Caco-2 (cell line): ENCODE measurements at regions of chr11 and their contacts with region 1.

Region 1: DNA sequence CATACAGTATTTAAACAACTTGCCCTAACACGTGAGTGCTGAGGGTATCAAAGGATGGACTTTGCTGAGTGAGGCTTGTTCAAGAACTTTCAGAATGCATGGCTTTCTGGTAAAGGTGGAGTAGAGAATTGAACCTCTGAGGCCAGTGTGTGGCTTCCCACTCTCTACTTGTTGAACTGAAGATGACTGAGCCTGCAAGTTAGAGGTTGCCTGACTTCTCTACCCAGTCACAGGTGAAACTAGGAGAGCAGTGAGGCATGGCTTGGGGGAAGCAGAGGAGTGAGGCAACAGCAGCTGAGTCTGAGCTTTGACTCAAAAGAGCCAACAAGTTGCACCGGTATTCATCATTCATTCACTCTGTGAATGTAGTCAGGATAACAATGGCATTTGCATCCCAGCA is 256.4 kb upstream of the SESN3 start:
- DNase-seq: peak; percentile 77 to 81
- H3K4me3 ChIP-seq: no peak overlapping the region
- H3K4me3 Mint-ChIP-seq: peak overlapping the region; percentile 73
- H3K27ac Mint-ChIP-seq: peak overlapping the region; percentile 96
- H3K4me1 ChIP-seq: peaks cover 29% of the 10 kb centered on the region
- H3K4me1 Mint-ChIP-seq: peaks cover 30% of the 10 kb centered on the region
- H3K27me3 ChIP-seq: no peaks in the 10 kb centered on the region
- H3K27me3 Mint-ChIP-seq: no peaks in the 10 kb centered on the region
- CTCF ChIP-seq: no peak

Region 2: DNA sequence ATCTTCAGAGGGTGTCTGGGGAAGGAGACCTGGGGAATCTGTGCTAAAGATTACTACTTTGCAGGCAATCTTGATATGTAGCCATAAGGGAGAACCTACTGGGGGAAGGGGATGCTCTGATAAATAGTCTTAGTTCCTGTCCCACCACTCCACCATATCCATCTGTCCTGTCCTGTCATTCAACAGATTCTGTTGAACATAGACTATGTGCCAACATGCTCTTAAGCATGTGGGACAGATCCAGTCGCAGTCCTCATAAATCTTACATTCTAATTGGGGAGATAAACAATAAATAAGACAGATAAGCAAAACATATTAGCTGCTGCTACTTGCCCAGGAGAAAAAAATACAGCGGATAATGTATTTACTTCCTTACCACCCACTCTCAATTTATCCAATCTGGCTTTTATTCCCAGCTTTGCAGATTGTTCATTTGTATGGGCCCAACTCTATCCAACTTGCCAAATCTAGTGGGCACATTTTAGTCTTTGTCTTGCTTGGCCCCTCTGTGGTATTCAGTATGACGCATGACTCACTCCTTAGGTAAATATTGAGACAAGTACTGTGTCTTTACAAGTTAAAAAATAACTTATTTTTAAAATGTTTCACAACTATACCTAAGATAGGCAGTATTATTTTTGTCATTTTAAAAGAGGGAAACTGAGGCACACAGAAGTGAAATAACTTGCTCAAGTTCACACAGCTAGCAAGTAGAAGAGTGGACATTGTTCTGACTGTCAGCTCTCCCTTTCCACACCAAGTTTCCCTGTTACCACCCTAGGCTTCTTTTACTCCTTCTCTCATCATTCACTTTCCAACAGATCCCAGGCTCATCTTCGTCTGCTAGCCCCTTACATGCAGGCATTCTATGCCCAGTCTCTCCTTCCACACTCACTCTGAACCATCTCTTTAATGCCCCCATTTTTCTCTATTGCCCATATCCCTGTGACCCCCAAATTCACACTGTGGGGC is 122.8 kb before region 1 on chr11:
- CTCF ChIA-PET with region 1: no interaction called
- POLR2A ChIA-PET with region 1: no interaction called
- intact Hi-C with region 1: loop called (anchors 1 kb)
- DNase-seq: peak in 1 of 2 experiments; percentile 61
- H3K4me3 ChIP-seq: no peak overlapping the region
- H3K4me3 Mint-ChIP-seq: peak overlapping the region; percentile 50
- H3K27ac Mint-ChIP-seq: peak overlapping the region; percentile 80
- H3K4me1 ChIP-seq: peaks cover 37% of the 10 kb centered on the region
- H3K4me1 Mint-ChIP-seq: peaks cover 38% of the 10 kb centered on the region
- H3K27me3 ChIP-seq: no peaks in the 10 kb centered on the region
- H3K27me3 Mint-ChIP-seq: no peaks in the 10 kb centered on the region
- CTCF ChIP-seq: no peak

Region 3: GRCh38 chr11:95387325-95387724 is 100.1 kb before region 1 on chr11:
- CTCF ChIA-PET with region 1: no interaction called
- POLR2A ChIA-PET with region 1: no interaction called
- intact Hi-C with region 1: no loop called
- DNase-seq: no peak
- H3K4me3 ChIP-seq: no peak overlapping the region
- H3K4me3 Mint-ChIP-seq: no peak overlapping the region
- H3K27ac Mint-ChIP-seq: no peak overlapping the region
- H3K4me1 ChIP-seq: no peaks in the 10 kb centered on the region; the same call in 1 of the 2 replicates
- H3K4me1 Mint-ChIP-seq: no peaks in the 10 kb centered on the region
- H3K27me3 ChIP-seq: no peaks in the 10 kb centered on the region
- H3K27me3 Mint-ChIP-seq: peaks cover 3% of the 10 kb centered on the region
- CTCF ChIP-seq: no peak

Region 4: DNA sequence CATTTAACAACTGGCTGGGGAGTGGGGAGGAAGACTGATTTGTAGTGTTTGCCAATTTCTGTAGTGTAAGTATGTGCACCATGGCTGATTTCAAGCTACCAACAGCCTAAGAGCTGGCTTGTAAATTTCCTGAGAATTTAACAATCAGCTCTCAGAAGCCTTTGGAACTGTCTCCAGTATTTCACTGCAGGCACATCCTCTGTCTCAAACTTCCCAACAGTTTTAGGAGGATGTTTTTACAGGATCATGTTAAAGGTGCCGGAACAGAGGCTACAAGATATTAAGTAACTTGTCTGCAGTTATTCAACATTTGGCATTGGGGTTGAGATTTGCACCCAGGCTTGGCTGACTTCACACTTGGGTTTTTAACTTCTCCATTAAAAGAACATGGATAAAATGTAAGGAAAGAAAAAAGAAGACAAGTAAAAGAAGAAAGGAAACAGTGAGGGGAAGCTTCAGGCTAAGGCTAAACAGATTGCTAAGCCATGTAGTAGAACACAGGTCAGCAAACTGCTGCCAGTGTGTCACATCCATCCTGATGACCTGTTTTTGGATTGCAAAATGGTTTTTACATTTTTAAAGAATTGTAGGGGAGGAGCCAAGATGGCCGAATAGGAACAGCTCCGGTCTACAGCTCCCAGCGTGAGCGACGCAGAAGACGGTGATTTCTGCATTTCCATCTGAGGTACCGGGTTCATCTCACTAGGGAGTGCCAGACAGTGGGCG is 51.6 kb before region 1 on chr11:
- CTCF ChIA-PET with region 1: no interaction called
- POLR2A ChIA-PET with region 1: no interaction called
- intact Hi-C with region 1: loop called (anchors 5 kb)
- DNase-seq: peak in 1 of 2 experiments; percentile 50
- H3K4me3 ChIP-seq: peak overlapping the region; percentile 29
- H3K4me3 Mint-ChIP-seq: peak overlapping the region; percentile 75
- H3K27ac Mint-ChIP-seq: peak overlapping the region; percentile 67
- H3K4me1 ChIP-seq: peaks cover 8% of the 10 kb centered on the region
- H3K4me1 Mint-ChIP-seq: peaks cover 9% of the 10 kb centered on the region
- H3K27me3 ChIP-seq: no peaks in the 10 kb centered on the region
- H3K27me3 Mint-ChIP-seq: no peaks in the 10 kb centered on the region
- CTCF ChIP-seq: no peak

Region 5: DNA sequence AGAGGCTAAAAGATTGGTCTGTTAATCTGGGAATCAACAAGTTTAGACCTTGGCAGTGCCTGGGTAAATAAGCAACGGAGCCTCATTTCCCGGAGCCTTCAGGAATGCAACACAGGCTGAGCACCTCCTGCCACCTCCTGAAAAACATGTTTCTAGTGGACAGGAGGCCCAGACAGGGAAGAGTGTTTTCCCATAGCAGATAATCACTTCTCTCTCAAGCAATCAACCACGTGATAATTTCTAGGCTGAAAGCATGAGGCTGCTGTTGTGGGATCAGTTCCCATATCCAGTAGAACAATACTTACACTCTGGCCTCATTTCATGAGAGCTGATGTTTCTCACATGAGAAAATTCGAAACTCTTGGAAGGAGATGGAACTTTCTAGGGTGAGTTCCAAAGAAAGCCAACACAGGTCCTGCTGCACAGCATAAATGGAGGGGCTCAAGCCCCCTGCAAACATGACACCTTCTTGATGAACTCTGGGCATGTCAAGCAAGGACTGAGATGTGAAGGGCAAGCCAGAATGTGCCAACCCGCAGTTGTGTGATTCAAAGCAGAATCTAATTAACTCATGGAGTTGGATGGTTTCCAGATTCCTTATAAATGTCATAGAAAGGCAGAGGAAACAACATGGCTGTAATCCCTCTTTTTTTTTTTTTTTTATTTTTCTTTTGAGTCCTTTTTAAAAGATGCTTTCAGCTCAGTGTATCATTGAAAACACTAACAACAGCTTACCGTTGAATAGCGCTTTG is 27.9 kb before region 1 on chr11:
- CTCF ChIA-PET with region 1: no interaction called
- POLR2A ChIA-PET with region 1: no interaction called
- intact Hi-C with region 1: no loop called
- DNase-seq: no peak
- H3K4me3 ChIP-seq: no peak overlapping the region
- H3K4me3 Mint-ChIP-seq: no peak overlapping the region
- H3K27ac Mint-ChIP-seq: no peak overlapping the region
- H3K4me1 ChIP-seq: no peaks in the 10 kb centered on the region
- H3K4me1 Mint-ChIP-seq: no peaks in the 10 kb centered on the region
- H3K27me3 ChIP-seq: no peaks in the 10 kb centered on the region
- H3K27me3 Mint-ChIP-seq: no peaks in the 10 kb centered on the region
- CTCF ChIP-seq: no peak

Region 6: DNA sequence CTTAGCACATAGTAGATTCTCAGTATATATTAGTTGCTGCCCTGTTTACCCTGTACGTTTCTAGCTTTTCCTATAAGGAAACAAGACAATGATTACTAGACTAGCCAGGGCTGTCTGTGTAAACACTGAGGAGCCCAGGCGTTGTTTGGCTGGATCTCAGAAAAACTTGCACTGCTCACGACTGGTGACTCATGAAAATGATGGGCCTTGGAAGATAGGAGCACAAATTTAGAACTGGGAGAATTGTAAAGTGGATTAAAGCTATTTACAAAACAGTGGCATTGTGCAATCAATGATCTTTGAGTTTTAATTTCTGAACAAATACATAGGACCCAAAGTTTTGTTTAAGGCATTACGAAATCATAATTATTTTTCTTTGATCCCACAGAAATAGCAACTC is 25.3 kb after region 1 on chr11:
- CTCF ChIA-PET with region 1: no interaction called
- POLR2A ChIA-PET with region 1: no interaction called
- intact Hi-C with region 1: loop called (anchors 1 kb)
- DNase-seq: peak; percentile 68 to 70
- H3K4me3 ChIP-seq: no peak overlapping the region
- H3K4me3 Mint-ChIP-seq: no peak overlapping the region
- H3K27ac Mint-ChIP-seq: no peak overlapping the region
- H3K4me1 ChIP-seq: peaks cover 12% of the 10 kb centered on the region
- H3K4me1 Mint-ChIP-seq: peaks cover 14% of the 10 kb centered on the region
- H3K27me3 ChIP-seq: no peaks in the 10 kb centered on the region
- H3K27me3 Mint-ChIP-seq: no peaks in the 10 kb centered on the region
- CTCF ChIP-seq: no peak

Region 7: DNA sequence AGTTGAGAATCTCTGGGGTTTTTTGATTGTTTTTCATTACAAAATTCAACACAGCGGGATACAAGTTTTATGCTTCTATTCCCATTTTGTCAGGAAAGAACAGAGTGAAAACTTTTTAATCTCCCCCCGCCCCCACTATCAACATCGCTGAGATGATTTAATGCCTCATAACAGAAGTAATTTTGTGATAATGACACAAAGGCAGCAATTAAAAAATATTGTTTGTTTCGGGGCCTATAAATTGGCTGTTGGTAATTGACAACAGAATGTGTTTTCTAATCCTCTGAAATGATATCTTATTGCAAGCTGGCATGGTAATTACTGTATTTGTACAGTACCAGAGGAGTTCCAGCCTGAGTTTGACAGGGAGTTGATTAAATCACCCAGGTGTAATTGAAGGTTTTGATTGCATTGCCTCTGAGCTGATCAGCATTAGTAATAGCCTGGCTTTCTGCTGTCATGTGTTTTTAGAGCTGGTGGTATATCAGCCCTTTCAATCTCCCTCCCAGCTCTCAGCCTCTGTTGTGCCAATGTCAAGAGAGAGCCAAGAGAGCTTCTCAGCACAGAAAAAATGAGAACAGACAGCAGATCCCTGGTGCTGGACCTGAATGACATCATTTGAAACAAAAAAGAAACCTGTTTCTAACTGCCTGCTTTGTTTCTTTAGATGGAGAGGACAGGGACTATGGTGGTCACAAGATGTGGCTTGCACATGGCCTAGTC is 37.1 kb after region 1 on chr11:
- CTCF ChIA-PET with region 1: no interaction called
- POLR2A ChIA-PET with region 1: no interaction called
- intact Hi-C with region 1: no loop called
- DNase-seq: no peak
- H3K4me3 ChIP-seq: no peak overlapping the region
- H3K4me3 Mint-ChIP-seq: no peak overlapping the region
- H3K27ac Mint-ChIP-seq: no peak overlapping the region
- H3K4me1 ChIP-seq: no peaks in the 10 kb centered on the region
- H3K4me1 Mint-ChIP-seq: no peaks in the 10 kb centered on the region
- H3K27me3 ChIP-seq: no peaks in the 10 kb centered on the region
- H3K27me3 Mint-ChIP-seq: peaks cover 2% of the 10 kb centered on the region
- CTCF ChIP-seq: no peak

Region 8: GRCh38 chr11:95705485-95706124 is 218.2 kb after region 1 on chr11:
- CTCF ChIA-PET with region 1: interaction called, 4 read pairs
- POLR2A ChIA-PET with region 1: no interaction called
- intact Hi-C with region 1: loop called (anchors 5 kb)
- DNase-seq: peak; percentile 85 to 89
- H3K4me3 ChIP-seq: no peak overlapping the region
- H3K4me3 Mint-ChIP-seq: no peak overlapping the region
- H3K27ac Mint-ChIP-seq: no peak overlapping the region
- H3K4me1 ChIP-seq: peaks cover 38% of the 10 kb centered on the region
- H3K4me1 Mint-ChIP-seq: peaks cover 24% of the 10 kb centered on the region
- H3K27me3 ChIP-seq: no peaks in the 10 kb centered on the region
- H3K27me3 Mint-ChIP-seq: no peaks in the 10 kb centered on the region
- CTCF ChIP-seq: peak; percentile 93 to 94